Esophagus muscularis mucosa (tissue), 4 donors: ENCODE measurements at regions of chr13 and their contacts with region 1.

Region 1: GRCh38 chr13:112767506-112768471 is 78.0 kb downstream of the ATP11A start:
- DNase-seq: no peak
- H3K4me3 ChIP-seq: no peak overlapping the region
- H3K27ac ChIP-seq: no peak overlapping the region
- H3K4me1 ChIP-seq: peaks cover 0 to 11% (median 0%) of the 10 kb centered on the region in 4 donors
- H3K27me3 ChIP-seq: no peaks in the 10 kb centered on the region
- CTCF ChIP-seq: no peak
- EP300 ChIP-seq: no peak
- POLR2A ChIP-seq: no peak

Region 2: GRCh38 chr13:112506056-112506455 is 261.7 kb before region 1 on chr13:
- intact Hi-C with region 1: no loop called
- DNase-seq: no peak
- H3K4me3 ChIP-seq: no peak overlapping the region
- H3K27ac ChIP-seq: no peak overlapping the region
- H3K4me1 ChIP-seq: no peaks in the 10 kb centered on the region
- H3K27me3 ChIP-seq: no peaks in the 10 kb centered on the region
- CTCF ChIP-seq: no peak
- EP300 ChIP-seq: no peak
- POLR2A ChIP-seq: no peak

Region 3: GRCh38 chr13:112689303-112690165 is 78.3 kb before region 1 on chr13 and contains the start of gene ATP11A:
- intact Hi-C with region 1: loop called (anchors 5 kb)
- DNase-seq: no peak
- H3K4me3 ChIP-seq: peak within 1 kb of the TSS; percentile 87 to 98 (median 92)
- H3K27ac ChIP-seq: peak within 1 kb of the TSS; percentile 89 to 96 (median 92)
- H3K4me1 ChIP-seq: peaks cover 37 to 48% (median 46%) of the 10 kb centered on the region in 4 donors
- H3K27me3 ChIP-seq: no peaks in the 10 kb centered on the region
- CTCF ChIP-seq: peak in 2 of 3 experiments; percentile 6 to 7
- EP300 ChIP-seq: no peak
- POLR2A ChIP-seq: peak; percentile 38
- total RNA-seq, gene ATP11A: 11.2 to 27.8 (median 14.3) TPM

Region 4: GRCh38 chr13:113044391-113045114 is 276.8 kb after region 1 on chr13:
- intact Hi-C with region 1: no loop called
- DNase-seq: no peak
- H3K4me3 ChIP-seq: no peak overlapping the region
- H3K27ac ChIP-seq: peak overlapping the region in 1 of 4 donors; percentile 27
- H3K4me1 ChIP-seq: peaks cover 5 to 6% (median 5%) of the 10 kb centered on the region in 4 donors
- H3K27me3 ChIP-seq: peaks cover 0 to 40% (median 0%) of the 10 kb centered on the region in 4 donors
- CTCF ChIP-seq: no peak
- EP300 ChIP-seq: no peak
- POLR2A ChIP-seq: no peak

Region 5: GRCh38 chr13:113337556-113337955 is 569.8 kb after region 1 on chr13:
- intact Hi-C with region 1: no loop called
- DNase-seq: no peak
- H3K4me3 ChIP-seq: no peak overlapping the region
- H3K27ac ChIP-seq: no peak overlapping the region
- H3K4me1 ChIP-seq: no peaks in the 10 kb centered on the region
- H3K27me3 ChIP-seq: no peaks in the 10 kb centered on the region
- CTCF ChIP-seq: no peak
- EP300 ChIP-seq: no peak
- POLR2A ChIP-seq: no peak